ENCODE measurements at regions of chr3 and their contacts with region 1.

Region 1: GRCh38 chr3:143269751-143270150 is 150.2 kb downstream of the CHST2 start:
- DNase-seq: no peak
- CTCF ChIP-seq: no peak

Region 2: GRCh38 chr3:143287403-143287802 is 17.7 kb after region 1 on chr3:
- CTCF ChIA-PET with region 1: interaction called, 12 read pairs
- POLR2A ChIA-PET with region 1: no interaction called
- DNase-seq: no peak
- CTCF ChIP-seq: no peak

Measured in GM10248 (cell line).